Right ventricle myocardium superior (tissue), 1 donor: ENCODE measurements at regions of chrX and their contacts with region 1.

Region 1: GRCh38 chrX:57453901-57454300 is 137.9 kb upstream of the ZXDB start:
- DNase-seq: no peak
- ATAC-seq: no peak

Region 2: GRCh38 chrX:57156397-57157049 is 297.4 kb before region 1 on chrX:
- intact Hi-C with region 1: loop called (anchors 10 kb)
- DNase-seq: peak; percentile 39
- ATAC-seq: peak; percentile 60

Region 3: DNA sequence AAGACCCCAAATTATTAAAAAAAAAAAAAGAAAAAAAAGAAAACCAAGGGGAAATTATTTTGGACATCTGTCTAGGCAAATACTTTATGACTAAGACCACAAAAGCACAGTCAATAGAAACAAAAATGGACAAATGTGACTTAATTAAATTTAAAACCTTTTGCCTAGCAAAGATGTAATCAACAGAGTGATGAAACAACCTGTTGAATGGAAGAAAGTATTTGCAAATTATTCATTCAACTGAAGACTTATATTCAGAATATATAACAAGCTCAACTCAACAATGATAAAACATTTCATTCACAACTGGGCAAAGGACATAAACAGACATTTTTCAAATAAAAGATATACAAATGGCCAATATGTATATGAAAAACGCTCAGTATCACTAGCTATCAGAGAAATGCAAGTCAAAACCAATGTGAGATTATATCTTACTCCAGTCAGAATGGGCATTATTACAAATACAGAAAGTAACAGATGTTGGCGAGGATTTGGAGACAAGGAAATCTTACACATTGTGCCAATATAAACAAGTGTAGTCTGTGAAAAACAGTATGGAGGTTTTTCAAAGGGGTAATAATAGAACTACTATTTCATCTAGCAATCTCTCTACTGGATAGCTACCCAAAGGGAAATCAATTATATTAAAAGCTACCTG is 100.3 kb before region 1 on chrX:
- intact Hi-C with region 1: no loop called
- DNase-seq: no peak
- ATAC-seq: no peak